ENCODE measurements at regions of chr1 and their contacts with region 1.

Region 1: DNA sequence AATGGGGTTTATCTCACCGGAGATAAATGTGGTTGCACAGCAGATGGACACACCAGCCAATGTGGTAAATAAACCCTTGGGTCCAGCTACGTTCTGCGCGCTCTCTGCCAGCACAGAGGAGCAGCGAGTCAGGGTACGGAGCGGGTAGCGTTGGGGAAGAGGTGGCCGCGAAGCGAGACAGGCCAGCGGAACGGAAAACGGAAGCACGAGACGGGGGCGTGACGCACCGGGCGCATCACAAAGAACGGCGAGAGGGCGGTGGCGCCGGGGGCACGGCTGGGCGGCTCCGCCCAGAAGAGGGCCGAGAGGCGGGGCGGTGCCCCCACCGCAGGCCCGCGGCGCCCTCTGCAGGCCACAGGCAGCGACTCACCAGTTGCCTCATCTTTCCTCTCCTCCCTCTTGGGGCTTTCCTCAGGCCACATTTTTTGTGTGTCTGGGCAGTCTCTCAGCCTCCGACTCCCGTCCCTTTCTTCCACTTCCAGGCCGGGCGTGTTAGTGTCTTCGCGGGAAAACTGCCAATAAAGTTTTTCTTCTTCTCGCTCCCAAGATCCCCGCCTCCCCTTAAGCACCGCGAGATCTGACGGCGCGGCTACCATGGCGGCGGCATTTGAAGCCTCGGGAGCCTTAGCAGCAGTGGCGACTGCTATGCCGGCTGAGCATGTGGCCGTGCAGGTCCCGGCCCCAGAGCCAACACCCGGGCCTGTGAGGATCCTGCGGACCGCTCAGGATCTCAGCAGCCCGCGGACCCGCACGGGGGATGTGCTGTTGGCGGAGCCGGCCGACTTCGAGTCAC is at the start of gene DDX20:
- DNase-seq: peak; percentile 89
- ATAC-seq: peak; percentile 94 to 95
- H3K4me3 ChIP-seq: peak within 1 kb of the TSS; percentile 81 to 99 (median 92)
- H3K27ac ChIP-seq: peak within 1 kb of the TSS; percentile 91 to 96 (median 92)
- H3K4me1 ChIP-seq: peaks cover 8 to 18% of the 10 kb centered on the region in 2 donors
- H3K27me3 ChIP-seq: no peaks in the 10 kb centered on the region
- CTCF ChIP-seq: peak; percentile 80 to 99 (median 98)
- POLR2A ChIP-seq: peak; percentile 39 to 52
- total RNA-seq, gene DDX20: 22.2 to 32.9 (median 29.2) TPM

Region 2: DNA sequence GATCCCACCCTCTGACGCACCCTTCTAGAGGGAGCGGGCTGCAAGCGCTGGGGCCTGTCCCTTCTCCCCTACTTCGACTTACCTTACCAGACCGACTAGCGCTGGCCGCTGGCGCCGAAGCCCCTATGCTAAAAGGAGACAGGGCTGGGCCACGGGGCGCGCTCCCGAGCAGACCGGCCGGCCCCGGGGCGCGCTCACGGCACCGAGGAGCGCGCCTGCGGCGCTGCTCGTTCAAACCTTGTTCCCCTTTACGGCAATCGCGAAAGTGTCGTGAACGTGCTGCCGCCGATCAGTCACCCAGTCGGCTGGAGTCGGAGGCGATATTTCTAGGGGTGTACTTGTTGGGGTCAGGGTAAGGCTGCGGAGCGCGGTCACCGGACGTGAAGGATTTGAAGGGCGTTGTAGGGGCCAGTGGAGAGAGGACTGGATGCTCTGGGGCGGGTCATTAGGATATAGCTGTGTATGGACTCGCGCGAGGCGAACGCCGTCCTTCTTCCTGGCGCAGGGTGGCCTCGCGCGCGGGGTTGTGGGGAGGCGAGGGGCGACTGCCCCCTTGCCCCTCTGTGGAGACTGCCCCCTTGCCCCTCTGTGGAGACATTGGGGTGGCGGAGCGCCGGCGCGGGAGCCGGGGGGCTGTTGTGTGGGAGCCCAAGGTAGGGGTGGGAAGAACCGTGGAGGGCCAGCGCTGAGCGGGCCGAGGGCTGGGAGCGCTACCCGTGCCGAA is 615.4 kb before region 1 on chr1 and contains the starts of genes CEPT1 and DRAM2:
- in situ Hi-C with region 1: loop called in 2 of 4 experiments (anchors 25 kb)
- intact Hi-C with region 1: loop called (anchors 10 kb)
- DNase-seq: peak; percentile 94
- ATAC-seq: peak; percentile 93 to 96
- H3K4me3 ChIP-seq: peak within 1 kb of the TSS; percentile 92 to 99 (median 96)
- H3K27ac ChIP-seq: peak within 1 kb of the TSS; percentile 94 to 98 (median 96)
- H3K4me1 ChIP-seq: peaks cover 28 to 42% of the 10 kb centered on the region in 2 donors
- H3K27me3 ChIP-seq: no peaks in the 10 kb centered on the region
- CTCF ChIP-seq: no peak
- POLR2A ChIP-seq: peak; percentile 58 to 69
- total RNA-seq, gene CEPT1: 8.2 to 14.8 (median 10.6) TPM
- total RNA-seq, gene DRAM2: 28.9 to 47.1 (median 36.7) TPM

Region 3: DNA sequence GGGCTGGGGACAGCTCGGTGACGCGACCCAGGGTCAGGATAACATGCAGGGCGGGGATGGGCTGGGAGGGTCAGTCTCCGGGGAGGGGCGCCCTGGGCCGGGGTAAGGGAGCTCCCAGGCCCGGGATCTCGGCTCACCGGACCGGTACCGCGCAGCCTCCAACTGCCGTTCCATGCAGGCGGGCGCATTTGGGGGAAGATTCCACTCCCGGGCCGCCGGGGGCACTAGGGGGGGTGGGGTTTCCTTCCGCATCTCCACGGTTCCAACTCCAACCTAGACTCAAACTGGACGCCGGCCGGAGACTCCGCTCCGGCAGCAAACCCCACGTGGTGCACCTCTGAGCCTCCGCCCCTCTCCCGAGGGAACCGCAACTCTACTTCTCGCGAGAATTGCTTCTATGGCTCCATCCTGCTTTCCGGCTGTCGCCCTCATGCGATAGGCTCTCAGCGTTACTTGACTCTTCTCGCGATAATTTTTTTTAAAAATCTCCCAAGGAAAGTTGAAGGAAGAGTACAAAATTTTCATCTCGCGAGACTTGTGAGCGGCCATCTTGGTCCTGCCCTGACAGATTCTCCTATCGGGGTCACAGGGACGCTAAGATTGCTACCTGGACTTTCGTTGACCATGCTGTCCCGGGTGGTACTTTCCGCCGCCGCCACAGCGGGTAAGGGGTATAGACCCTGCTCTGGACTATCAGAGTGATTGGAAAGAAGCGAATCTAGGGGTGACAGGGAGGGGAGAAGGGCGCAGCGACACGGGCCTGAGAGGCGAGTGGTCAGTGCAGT is 306.4 kb before region 1 on chr1 and contains the starts of genes ATP5PB and WDR77:
- in situ Hi-C with region 1: no loop called
- intact Hi-C with region 1: loop called (anchors 1 kb)
- DNase-seq: peak; percentile 96 to 98
- ATAC-seq: peak; percentile 98 to 99
- H3K4me3 ChIP-seq: peak within 1 kb of the TSS; percentile 76 to 97 (median 88)
- H3K27ac ChIP-seq: peak within 1 kb of the TSS; percentile 83 to 96 (median 92)
- H3K4me1 ChIP-seq: peaks cover 40 to 42% of the 10 kb centered on the region in 2 donors
- H3K27me3 ChIP-seq: no peaks in the 10 kb centered on the region
- CTCF ChIP-seq: peak in 1 of 5 experiments; percentile 30
- POLR2A ChIP-seq: peak in 1 of 2 donors; percentile 42
- total RNA-seq, gene ATP5PB: 232 to 350 (median 266) TPM
- total RNA-seq, gene WDR77: 53.3 to 59.2 (median 56.7) TPM

Region 4: GRCh38 chr1:111619635-111620440 is 135.7 kb before region 1 on chr1 and contains the start of gene RAP1A:
- in situ Hi-C with region 1: no loop called
- intact Hi-C with region 1: loop called (anchors 5 kb)
- DNase-seq: peak; percentile 91 to 94
- ATAC-seq: peak; percentile 88 to 90
- H3K4me3 ChIP-seq: peak within 1 kb of the TSS; percentile 59 to 91 (median 72)
- H3K27ac ChIP-seq: peak within 1 kb of the TSS; percentile 94 to 98 (median 97)
- H3K4me1 ChIP-seq: peaks cover 36 to 48% of the 10 kb centered on the region in 2 donors
- H3K27me3 ChIP-seq: no peaks in the 10 kb centered on the region
- CTCF ChIP-seq: peak in 1 of 5 experiments; percentile 18
- POLR2A ChIP-seq: peak; percentile 82 to 86
- total RNA-seq, gene RAP1A: 49.4 to 72.1 (median 57.9) TPM

Region 5: DNA sequence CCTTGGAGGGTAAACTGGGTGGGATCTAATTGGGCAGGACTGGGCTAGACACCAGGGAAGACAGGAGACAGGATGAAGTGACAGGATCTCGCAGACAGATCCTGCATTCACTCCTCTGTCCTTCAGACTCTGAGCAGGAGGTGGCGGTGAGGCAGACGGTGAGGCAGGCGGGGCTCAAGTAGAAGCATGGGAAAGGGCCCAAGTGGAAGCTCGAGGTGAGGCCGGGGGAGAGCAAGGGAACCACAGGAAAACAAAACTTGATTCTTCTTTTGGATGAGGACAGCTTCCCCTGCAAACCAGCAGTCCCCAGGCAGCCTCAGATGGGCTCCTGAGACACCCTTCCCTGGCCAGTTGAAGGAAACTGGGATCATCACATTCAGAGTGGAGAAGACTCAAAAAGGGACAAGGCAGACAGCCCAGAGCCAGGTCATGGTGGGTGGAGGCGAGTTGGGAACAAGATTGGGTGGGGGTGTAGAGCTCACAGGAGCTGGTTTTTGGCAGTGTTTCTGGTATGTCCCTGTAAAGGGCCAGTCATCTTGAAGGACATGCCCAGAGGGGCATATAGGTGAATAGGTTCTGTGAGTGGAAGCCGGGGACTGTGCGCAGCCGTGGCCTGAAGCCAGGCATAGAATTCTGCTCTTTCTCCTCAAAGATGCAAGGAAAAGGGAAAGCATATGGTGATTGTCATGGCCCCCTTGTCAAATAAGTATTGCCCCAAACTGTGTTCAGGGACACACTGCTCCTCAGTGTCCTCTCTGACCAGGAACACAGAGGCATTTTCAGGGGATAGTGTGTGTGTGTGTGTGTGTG is 34.3 kb before region 1 on chr1:
- in situ Hi-C with region 1: loop called in 2 of 4 experiments (anchors 5 kb)
- intact Hi-C with region 1: loop called (anchors 1 kb)
- DNase-seq: no peak
- ATAC-seq: peak in 1 of 2 donors; percentile 11
- H3K4me3 ChIP-seq: no peak overlapping the region
- H3K27ac ChIP-seq: peak overlapping the region; percentile 81 to 93 (median 87)
- H3K4me1 ChIP-seq: peaks cover 63% of the 10 kb centered on the region in 2 donors
- H3K27me3 ChIP-seq: no peaks in the 10 kb centered on the region
- CTCF ChIP-seq: no peak
- POLR2A ChIP-seq: no peak

Region 6: DNA sequence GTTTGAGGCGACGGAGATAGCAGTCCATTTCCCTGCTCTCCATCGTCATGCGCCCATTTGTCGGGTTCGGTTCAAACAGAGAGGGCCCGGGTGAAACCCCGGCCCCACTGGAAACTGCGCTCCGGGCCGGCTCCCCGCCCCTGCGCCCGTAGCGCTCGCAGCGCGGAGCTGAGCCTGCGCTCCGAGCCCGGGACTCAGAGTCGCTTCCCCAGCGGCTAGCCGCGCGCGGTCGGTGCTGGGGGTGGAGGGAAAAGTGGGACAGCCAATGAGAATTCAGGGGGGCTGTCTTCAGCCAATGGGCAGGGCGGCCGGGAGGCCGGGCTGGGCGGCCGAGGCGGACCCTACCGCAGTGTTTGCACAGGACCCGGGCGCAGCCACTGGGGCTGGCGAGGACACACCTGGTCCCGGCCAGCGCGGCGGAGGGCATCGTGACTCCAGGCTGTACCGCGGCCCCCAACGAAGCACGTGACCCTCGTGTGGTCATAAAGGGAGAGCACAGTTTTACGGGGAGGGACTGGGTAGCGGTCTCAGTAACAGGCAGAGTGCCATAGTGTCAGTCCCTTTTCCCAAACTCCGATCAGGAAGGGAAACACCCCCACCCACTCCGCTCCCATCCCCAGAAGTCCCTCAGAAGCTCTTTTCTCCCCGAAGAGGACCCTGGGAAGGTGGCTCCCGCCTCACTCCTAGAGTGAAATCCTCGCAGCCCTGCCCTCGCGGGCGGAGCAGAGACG is 16.2 kb before region 1 on chr1 and contains the start of gene INKA2:
- in situ Hi-C with region 1: no loop called
- intact Hi-C with region 1: loop called (anchors 1 kb)
- DNase-seq: peak; percentile 90 to 91
- ATAC-seq: peak; percentile 79
- H3K4me3 ChIP-seq: peak within 1 kb of the TSS; percentile 56 to 80 (median 70)
- H3K27ac ChIP-seq: peak within 1 kb of the TSS; percentile 85 to 96 (median 93)
- H3K4me1 ChIP-seq: peaks cover 36 to 38% of the 10 kb centered on the region in 2 donors
- H3K27me3 ChIP-seq: no peaks in the 10 kb centered on the region
- CTCF ChIP-seq: peak in 2 of 5 experiments; percentile 17 to 18
- POLR2A ChIP-seq: peak; percentile 94 to 95
- total RNA-seq, gene INKA2: 4.7 to 11.8 (median 5.1) TPM

Region 7: GRCh38 chr1:111769517-111770146 is 14.1 kb after region 1 on chr1:
- in situ Hi-C with region 1: no loop called
- intact Hi-C with region 1: loop called (anchors 1 kb)
- DNase-seq: peak; percentile 12 to 45
- ATAC-seq: peak; percentile 98
- H3K4me3 ChIP-seq: peak overlapping the region in 1 of 4 donors; percentile 1
- H3K27ac ChIP-seq: peak overlapping the region; percentile 69 to 81 (median 72)
- H3K4me1 ChIP-seq: peaks cover 4 to 7% of the 10 kb centered on the region in 2 donors
- H3K27me3 ChIP-seq: no peaks in the 10 kb centered on the region
- CTCF ChIP-seq: peak; percentile 86 to 95 (median 87)
- POLR2A ChIP-seq: no peak